Panc1 (cell line): ENCODE measurements at regions of chr5 and their contacts with region 1.

Region 1: DNA sequence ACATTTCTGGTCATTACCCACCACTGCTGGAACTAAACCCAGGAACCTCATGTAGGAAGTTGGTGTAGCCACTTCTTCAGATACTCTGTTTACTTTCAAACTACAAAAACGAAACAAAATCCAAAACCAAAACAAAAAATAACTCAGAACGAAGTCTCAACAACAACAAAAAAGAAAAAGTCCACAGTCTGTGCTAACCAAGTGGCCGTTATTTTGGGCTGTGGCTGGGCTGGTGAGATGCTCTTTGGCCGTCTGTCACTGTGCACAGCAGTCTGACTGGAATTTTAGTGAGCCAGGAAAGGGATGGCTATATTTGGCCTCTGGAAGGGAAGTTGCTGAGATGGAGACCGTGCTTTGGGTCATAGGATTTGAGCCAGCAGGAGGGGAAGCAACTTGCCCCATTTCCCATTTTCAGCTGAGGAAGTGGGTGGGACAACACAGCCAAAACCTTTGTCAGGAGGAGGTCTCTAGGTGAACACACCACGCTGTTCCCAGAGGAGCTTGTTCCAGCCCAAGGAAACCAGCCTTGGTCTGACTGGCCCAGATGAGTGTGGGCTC is 334.1 kb downstream of the ZSWIM6 start:
- DNase-seq: no peak
- ATAC-seq: no peak
- H3K4me3 ChIP-seq: no peak overlapping the region
- H3K27ac ChIP-seq: no peak overlapping the region
- H3K4me1 ChIP-seq: no peaks in the 10 kb centered on the region; the same call in 1 of the 2 replicates
- H3K27me3 ChIP-seq: peaks cover 6% of the 10 kb centered on the region; the same call in 1 of the 2 replicates
- CTCF ChIP-seq: no peak

Region 2: GRCh38 chr5:61625681-61626621 is 40.2 kb before region 1 on chr5:
- CTCF ChIA-PET with region 1: no interaction called
- POLR2A ChIA-PET with region 1: no interaction called
- in situ Hi-C with region 1: no loop called
- intact Hi-C with region 1: no loop called
- DNase-seq: no peak
- ATAC-seq: peak; percentile 95
- H3K4me3 ChIP-seq: peak overlapping the region; percentile 43 to 54
- H3K27ac ChIP-seq: peak overlapping the region; percentile 57
- H3K4me1 ChIP-seq: peaks cover 5% of the 10 kb centered on the region; the same call in 1 of the 2 replicates
- H3K27me3 ChIP-seq: no peaks in the 10 kb centered on the region
- CTCF ChIP-seq: no peak

Region 3: DNA sequence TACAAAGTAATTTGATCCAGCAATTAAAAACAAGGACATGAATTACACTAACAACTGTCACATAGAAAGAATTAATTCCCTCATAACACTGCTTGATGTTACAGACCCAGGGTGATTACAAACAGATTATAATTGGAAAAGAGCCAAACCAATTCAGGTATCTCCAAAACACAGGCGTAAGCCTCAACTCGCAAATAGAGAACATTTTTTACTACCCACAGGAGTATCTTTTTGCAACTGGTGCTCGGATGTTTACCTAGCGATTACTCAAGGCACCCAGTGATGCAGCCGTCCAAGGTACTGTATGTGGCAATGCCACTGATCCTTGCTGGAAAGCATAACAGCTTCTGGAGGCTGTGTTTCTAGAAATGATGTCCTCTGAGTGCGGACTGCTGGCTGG is 253.8 kb after region 1 on chr5:
- CTCF ChIA-PET with region 1: no interaction called
- POLR2A ChIA-PET with region 1: no interaction called
- in situ Hi-C with region 1: no loop called
- intact Hi-C with region 1: loop called (anchors 10 kb)
- DNase-seq: no peak
- ATAC-seq: no peak
- H3K4me3 ChIP-seq: no peak overlapping the region
- H3K27ac ChIP-seq: no peak overlapping the region
- H3K4me1 ChIP-seq: no peaks in the 10 kb centered on the region
- H3K27me3 ChIP-seq: peaks cover 6% of the 10 kb centered on the region; the same call in 1 of the 2 replicates
- CTCF ChIP-seq: no peak